ENCODE measurements at regions of chr7 and their contacts with region 1.

Region 1: DNA sequence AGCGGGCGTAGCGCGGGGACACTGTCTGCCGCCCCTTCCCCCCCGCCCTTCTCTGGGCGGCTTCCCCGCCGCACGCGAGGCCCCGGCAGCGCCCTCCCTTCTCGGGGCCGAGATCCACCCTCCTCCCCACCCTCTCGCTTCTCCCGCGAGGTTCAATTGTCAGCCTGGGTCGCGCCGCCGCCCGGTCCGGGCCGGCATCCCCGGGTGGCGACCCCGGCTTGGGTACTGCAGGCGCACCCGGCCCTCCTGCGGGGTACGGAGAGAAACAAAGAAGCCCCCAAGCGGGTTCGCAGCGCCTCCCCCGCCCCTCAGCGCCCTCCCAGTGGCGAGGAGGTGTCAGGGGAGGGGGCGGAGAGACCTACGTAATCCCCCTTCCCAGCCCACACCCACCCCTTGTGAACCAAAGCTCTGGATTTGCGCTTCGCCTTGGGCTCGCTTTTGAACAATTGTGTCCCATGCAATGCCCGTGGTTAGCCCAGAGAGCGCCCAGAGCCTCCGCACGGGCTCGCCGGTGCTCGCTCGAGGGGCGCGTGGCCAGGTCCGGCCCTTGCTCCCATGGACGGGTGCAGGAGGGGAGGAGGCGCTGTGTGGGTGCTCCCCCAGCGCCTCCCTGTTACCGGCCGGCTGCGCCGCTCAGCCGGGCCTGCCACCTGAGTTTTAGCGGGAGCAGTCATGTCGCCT is 634 bp downstream of the HECW1 start:
- DNase-seq: no peak
- ATAC-seq: peak; percentile 84

Region 2: DNA sequence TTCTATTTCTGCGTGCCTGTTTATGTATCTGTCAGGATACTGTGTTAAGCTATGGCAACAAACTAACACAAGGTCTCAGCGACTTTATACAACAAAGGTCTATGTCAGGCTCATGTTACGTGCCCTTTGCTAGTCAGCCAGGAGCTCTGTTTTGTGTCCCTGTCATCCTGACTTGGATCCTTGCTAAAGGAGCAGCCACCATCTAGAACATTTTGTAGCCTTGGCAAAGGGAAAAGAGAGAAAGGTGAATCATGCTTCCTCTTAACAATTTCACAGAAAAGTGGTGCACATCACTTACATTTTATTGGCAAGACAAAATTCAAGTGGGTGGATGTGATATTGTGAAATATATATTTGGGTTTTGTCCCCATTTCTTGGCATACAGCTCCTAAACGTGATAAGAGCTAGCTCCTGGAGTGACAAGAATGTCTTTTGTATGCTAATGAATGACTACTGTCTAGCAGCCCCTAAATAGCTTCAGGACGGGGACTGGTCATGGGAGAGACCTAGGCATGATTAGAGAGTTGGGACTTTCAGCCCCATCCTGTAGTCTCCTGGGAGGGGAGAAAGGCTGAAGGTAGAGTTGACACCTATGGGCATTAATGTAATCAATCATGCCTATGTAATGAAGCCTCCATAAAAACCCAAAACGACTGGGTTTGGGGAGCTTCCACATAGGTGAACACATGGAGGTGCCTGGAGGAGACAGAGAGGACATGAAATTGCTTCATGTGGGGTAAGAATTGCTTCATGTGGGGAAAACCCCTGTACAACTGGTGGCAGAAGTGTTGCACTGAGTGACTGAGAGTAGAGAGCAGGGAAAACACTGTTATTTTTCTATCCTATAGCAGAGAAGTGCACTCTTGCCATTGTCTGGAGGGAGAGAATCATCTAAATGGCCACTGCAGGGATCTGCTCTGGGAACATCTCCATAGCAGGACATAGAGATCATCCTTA is 148.0 kb before region 1 on chr7:
- intact Hi-C with region 1: loop called (anchors 5 kb)
- DNase-seq: no peak
- ATAC-seq: no peak

Region 3: DNA sequence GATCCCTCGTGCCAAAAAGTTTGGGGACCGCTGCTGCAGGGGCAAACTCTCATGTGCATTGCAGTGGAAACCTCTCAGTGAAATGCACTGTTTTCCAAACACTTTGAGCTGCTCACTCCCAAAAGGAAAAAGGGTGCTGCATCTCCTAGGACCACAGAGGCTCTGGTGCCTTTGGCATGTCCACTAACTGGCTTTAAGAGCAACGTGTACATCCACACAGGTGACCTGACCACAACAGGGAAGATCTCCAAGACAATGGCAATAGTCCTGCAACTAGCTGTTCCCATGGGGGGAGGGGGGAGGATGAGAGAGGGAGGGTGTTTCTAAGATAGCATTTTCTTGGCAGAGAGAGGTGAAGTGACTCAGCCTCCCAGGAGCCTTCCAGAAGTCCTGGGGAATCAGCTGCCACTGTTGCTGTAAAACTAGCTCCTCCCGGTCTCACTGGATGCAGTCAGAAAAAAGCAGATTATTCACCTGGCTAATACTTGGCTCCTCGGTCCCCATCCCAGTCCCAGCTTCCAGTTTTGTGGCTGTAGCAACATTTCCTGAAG is 181.1 kb after region 1 on chr7:
- intact Hi-C with region 1: no loop called
- DNase-seq: no peak
- ATAC-seq: no peak